Right cardiac atrium (tissue), 5 donors: ENCODE measurements at regions of chr15 and their contacts with region 1.

Region 1: DNA sequence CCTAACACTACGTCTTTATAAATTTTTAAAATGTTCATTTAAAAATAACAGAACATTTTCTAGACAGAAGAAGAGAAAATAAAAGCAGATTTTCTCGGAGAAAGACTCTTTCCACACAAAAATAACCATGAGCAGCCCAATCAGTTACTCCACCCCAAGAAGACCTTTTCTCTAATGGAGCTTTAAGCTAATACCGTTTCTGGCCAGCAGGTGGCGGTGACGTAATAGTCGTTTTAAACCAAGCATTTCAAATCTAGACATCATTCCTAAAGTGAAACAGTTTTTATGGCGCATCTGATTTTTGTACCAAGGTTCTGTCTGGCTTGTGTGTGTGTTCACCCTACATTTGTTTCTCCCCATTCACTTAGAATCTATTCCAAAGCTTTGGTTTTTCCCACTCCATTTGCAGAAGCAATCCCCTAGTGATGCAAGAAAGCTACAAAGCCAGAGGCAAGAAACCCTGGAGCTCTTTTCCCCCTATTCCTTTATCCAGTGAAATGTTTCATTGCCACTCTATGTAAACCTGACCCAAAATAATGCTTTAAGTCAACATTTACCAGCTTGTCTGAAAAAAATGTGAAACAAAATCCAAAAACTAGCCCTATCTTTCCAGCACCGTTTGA is 336.7 kb upstream of the IGF1R start:
- DNase-seq: peak; percentile 69 to 91 (median 73)
- ATAC-seq: peak in 1 of 2 donors; percentile 48
- H3K4me3 ChIP-seq: no peak overlapping the region
- H3K27ac ChIP-seq: no peak overlapping the region
- H3K4me1 ChIP-seq: no peaks in the 10 kb centered on the region
- H3K27me3 ChIP-seq: no peaks in the 10 kb centered on the region

Region 2: GRCh38 chr15:98413933-98414546 is 102.4 kb after region 1 on chr15:
- intact Hi-C with region 1: loop called in 1 of 4 experiments (anchors 5 kb)
- DNase-seq: peak; percentile 63 to 76 (median 74)
- ATAC-seq: peak; percentile 32 to 41
- H3K4me3 ChIP-seq: no peak overlapping the region
- H3K27ac ChIP-seq: no peak overlapping the region
- H3K4me1 ChIP-seq: no peaks in the 10 kb centered on the region
- H3K27me3 ChIP-seq: no peaks in the 10 kb centered on the region

Region 3: DNA sequence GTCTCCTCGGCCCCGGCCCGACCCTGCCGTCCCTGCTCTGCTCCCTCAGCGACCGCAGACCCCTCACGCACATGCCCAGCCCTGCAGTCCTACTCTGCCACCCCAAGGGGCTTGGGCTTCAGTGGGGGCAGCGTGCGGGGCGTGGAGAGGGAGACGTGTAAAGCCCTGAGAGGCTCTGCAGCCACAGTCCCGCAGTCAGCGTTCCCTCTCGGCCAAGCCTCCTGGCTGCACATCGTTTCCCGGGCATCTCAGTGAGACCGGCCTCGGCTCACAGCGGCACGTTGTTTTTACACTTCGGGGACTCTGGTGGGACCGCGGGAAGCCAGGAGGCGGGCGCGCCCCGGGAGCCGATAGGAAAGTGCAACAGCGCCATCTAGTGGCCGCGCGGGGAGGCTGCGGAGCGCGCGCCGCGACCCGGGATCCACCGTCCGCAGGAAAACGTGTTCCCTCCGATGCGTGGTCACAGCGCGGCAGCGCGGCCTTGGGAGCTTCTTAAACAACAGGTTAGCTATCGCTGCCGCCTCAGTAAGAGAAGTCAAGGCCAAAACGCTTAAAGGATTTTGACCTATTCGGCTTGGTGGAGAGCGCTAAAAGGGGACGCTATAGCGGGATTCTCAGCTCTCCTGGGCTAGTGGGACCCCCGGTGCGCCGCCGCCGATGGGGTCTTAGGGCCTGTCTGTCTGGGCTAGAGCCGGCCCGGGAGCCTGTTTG is 109.9 kb after region 1 on chr15:
- intact Hi-C with region 1: loop called (anchors 2 to 5 kb)
- DNase-seq: peak; percentile 76 to 91 (median 88)
- ATAC-seq: peak; percentile 85 to 87
- H3K4me3 ChIP-seq: no peak overlapping the region
- H3K27ac ChIP-seq: no peak overlapping the region
- H3K4me1 ChIP-seq: no peaks in the 10 kb centered on the region
- H3K27me3 ChIP-seq: no peaks in the 10 kb centered on the region

Region 4: GRCh38 chr15:98537516-98538060 is 225.9 kb after region 1 on chr15:
- intact Hi-C with region 1: no loop called
- DNase-seq: no peak
- ATAC-seq: no peak
- H3K4me3 ChIP-seq: no peak overlapping the region
- H3K27ac ChIP-seq: no peak overlapping the region
- H3K4me1 ChIP-seq: no peaks in the 10 kb centered on the region
- H3K27me3 ChIP-seq: no peaks in the 10 kb centered on the region